Sciatic nerve (tissue), 2 donors: ENCODE measurements at regions of chr13 and their contacts with region 1.

Region 1: DNA sequence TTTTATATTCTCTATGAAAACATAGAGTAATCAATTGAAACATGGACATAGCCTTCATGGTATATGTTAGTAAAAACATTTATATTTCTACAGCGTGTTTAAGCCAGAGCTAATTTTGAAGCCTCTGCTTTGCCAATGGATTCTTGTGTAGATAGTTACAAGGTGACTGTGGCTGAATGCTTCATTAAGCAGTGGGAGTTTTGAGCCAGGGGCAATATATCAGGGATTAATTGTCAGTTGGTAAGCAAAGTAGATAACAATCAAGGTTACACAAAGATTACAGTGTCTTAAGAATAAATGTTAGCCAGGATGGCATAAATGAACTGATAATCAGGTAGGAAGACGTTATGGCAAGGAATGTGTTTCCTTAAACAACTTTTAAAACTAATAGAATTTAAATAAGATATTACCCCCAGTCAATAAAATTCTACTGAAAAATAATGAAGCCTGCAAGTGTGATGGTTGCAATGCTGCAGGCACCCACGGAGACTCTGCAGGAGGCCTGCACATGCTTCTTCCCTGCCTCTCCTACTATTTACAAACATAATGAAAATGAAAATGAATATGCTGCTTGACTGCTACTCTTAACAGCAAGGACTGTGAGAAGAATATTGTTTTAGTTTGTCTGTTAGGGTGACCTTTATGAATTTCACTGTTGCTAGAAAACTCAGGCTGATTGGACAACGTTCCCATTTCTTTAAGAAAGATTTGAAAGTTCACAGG is 588.5 kb downstream of the GPC5 start:
- DNase-seq: no peak
- ATAC-seq: no peak

Region 2: DNA sequence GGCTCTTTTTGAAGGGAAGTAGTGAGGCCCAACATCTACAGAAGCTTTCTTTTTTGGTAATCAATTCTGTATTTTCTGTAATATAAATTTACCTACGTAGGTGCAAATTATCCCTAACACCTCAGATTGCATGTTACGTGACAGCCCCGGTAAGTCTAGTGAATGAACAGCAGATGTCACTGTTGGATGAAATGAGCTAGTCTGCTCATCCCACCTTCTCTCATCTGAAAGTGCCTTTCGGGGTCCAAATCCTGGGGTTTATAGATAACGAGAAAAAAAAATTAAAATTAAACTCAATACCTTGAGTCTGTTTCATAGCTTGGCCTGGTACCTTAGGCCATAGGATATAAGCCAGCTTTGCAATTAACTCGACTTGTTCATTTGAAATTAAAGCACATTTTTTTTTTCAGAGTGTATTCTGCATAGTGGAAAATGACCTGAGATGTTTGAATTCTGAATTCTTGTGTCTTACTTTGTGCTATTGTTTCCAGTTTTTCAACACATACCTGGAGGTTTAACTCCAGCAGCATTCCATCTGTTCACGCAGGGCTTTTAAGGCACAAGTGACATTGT is 40.3 kb before region 1 on chr13:
- intact Hi-C with region 1: no loop called
- DNase-seq: no peak
- ATAC-seq: no peak

Region 3: DNA sequence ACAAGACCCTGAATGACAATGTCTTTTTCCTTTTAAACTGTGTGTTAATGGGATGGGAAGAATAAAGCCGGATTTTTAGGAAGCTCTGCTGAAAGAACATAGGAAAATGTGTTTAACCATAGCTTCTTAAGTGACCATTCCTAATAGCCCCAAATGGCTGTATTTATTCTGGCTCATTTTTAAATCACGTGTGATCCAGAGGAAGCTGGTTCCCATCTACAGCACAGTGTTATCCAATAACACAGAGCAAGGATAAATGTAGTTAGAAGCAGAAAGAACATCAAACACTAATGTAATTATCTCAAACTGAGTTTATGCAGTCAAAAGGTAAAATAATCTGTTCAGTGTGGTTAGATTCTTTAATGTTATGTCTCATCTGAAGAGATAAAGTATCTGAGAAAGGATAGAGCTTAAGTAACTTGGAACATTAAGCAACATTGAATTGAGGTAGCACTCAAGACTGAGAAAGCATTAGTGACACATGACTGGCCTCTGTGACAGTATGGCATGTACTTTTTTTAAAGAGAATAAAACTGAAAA is 264.8 kb after region 1 on chr13:
- intact Hi-C with region 1: loop called (anchors 10 kb)
- DNase-seq: no peak
- ATAC-seq: no peak